Calu3 (cell line): ENCODE measurements at regions of chr5 and their contacts with region 1.

Region 1: DNA sequence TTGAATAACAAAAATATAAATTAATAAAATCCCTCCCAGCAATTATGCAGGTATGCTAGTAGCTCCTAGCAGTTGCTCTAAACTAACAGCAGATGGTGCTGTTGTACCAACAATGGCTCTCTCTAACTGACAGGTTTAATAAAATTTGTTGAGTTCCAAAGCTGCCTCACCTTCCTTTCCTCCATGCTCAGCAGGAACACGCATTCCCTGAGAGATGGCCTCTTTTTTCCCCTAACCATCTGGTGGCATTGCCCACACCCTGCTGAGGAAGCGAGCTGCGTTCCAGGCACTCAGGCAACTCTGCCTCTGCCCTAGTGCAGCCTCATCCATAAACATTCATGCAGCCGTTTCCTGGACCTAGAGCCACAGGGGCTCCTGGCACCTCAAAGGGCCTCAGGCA is 106.2 kb downstream of the KLHL3 start:
- DNase-seq: peak; percentile 39
- H3K4me3 Mint-ChIP-seq: no peak overlapping the region
- H3K27ac Mint-ChIP-seq: no peak overlapping the region
- H3K4me1 Mint-ChIP-seq: peaks cover 14% of the 10 kb centered on the region
- H3K27me3 Mint-ChIP-seq: no peaks in the 10 kb centered on the region
- CTCF ChIP-seq: peak; percentile 93

Region 2: GRCh38 chr5:137735555-137736284 is 106.1 kb after region 1 on chr5 and contains the start of gene KLHL3:
- CTCF ChIA-PET with region 1: interaction called, 62 read pairs
- intact Hi-C with region 1: no loop called
- DNase-seq: peak; percentile 73
- H3K4me3 Mint-ChIP-seq: no peak within 1 kb of the TSS
- H3K27ac Mint-ChIP-seq: no peak within 1 kb of the TSS
- H3K4me1 Mint-ChIP-seq: peaks cover 10% of the 10 kb centered on the region
- H3K27me3 Mint-ChIP-seq: no peaks in the 10 kb centered on the region
- CTCF ChIP-seq: no peak
- total RNA-seq, gene KLHL3: 16.9 and 18.2 TPM in 2 replicates

Region 3: DNA sequence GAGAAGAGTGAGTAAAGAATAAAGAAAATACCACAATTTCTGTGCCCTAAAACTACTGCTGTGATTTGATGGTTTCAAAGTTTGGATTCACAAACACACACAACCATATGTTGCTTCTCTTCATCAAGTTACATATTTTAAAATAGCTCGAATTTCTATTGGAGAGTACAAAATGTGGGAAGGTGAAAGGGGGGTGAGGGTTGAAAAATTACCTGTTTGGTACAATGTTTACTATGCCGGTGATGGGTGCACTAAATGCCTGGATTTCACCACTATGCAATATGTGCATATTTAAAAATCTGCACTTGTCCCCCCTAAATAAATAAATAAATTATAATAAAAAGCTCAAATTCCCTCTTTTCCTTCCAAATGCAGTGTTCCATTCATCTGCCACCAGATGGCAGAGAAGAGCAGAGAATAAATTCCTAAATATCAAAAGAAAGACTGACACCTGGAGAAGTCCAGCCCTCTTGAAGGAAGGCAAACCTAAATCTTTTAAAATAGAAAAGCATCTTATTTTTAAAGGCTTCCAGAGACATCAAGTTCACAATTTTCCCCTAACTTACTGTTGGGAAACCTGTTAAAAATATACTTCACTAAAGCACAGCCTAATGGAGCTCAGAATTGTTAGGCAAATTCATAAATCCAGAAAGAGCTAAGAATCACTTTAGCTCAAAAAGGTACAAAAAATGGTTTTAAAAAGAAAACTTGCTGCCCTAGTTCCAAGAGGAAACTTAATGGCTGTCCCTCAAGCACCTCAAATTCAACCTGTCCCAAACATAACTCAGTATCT is 149.3 kb after region 1 on chr5:
- CTCF ChIA-PET with region 1: interaction called, 15 read pairs
- intact Hi-C with region 1: no loop called
- DNase-seq: peak; percentile 37
- H3K4me3 Mint-ChIP-seq: no peak overlapping the region
- H3K27ac Mint-ChIP-seq: no peak overlapping the region
- H3K4me1 Mint-ChIP-seq: peaks cover 9% of the 10 kb centered on the region
- H3K27me3 Mint-ChIP-seq: peaks cover 5% of the 10 kb centered on the region
- CTCF ChIP-seq: peak; percentile 61

Region 4: DNA sequence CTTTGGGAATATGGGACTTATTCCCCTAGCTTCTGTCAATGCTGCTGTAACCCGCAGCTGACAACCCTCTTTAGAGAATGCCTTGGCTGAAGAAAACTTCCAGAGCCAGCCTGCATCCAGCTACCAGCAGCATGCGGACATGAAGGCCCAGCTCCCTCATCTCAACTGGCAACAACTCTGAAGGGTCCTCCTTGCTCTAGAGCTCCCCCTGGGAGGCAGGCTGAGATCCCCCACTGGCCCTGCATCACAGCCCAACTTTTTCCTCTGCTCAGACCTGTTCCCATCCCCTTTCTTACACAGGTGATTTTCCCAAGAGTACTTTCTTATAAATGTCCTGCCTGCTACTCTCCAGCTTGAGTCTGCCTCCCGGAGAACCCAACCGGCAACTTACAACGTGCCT is 435.5 kb after region 1 on chr5:
- CTCF ChIA-PET with region 1: interaction called, 9 read pairs
- intact Hi-C with region 1: loop called (anchors 2 kb)
- DNase-seq: peak; percentile 40
- H3K4me3 Mint-ChIP-seq: no peak overlapping the region
- H3K27ac Mint-ChIP-seq: no peak overlapping the region
- H3K4me1 Mint-ChIP-seq: no peaks in the 10 kb centered on the region
- H3K27me3 Mint-ChIP-seq: no peaks in the 10 kb centered on the region
- CTCF ChIP-seq: peak; percentile 60